B cell (primary cell): ENCODE measurements at regions of chr13 and their contacts with region 1.

Region 1: DNA sequence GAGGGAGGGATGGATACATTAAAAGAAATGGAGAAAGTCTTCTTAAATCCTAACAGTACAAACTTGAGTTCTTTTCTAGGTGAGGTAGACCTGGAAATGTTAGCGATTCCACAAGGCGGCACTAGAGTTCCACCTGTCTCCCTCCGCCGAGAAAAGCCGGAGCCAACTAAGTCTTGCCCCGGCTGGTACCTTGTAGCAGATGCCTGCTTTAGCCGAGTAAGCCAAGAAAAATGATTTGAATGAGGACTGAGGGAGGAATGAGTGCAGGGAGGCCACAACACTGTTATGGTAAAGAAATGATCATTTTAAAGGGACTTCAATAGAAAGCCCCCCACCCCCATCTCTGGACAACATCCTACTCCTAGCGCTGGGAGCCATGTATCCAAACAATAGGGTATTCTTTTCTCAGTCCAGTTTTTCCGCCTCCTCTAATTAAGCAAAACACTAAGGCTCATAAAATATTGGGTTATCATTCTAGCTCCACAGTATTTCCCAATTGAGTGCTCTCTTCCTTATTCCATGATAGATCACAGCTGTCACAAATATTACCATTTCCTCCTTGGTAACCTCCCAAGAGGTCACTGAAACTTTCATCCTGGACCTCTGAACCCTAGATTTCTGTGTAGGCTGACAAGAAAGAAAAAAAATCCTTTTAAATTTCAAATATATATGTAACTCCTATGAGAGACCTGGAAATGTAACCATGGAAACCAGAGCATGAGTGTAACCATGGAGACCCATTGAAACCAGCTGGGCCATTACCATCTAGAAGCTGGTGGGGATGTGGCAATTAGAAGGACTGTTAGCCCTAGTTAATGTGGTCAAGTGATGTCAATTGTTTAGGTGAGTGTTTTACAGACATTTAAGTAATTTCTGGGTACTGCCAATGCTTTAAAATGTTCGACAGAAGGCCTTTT is 58.3 kb downstream of the GPALPP1 start:
- DNase-seq: peak; percentile 82
- ATAC-seq: peak; percentile 87
- H3K4me3 ChIP-seq: peak overlapping the region in 3 of 5 experiments; percentile 30 to 55 (median 32)
- H3K4me3 Mint-ChIP-seq: peak overlapping the region; percentile 79
- H3K27ac ChIP-seq: no peak overlapping the region
- H3K27ac Mint-ChIP-seq: no peak overlapping the region
- H3K4me1 ChIP-seq: peaks cover 23 to 25% of the 10 kb centered on the region in 2 donors
- H3K4me1 Mint-ChIP-seq: peaks cover 23% of the 10 kb centered on the region
- H3K27me3 ChIP-seq: peaks cover 0 to 4% (median 2%) of the 10 kb centered on the region in 4 experiments
- H3K27me3 Mint-ChIP-seq: peaks cover 29% of the 10 kb centered on the region
- CTCF ChIP-seq: peak; percentile 83

Region 2: GRCh38 chr13:44484562-44485138 is 563.0 kb before region 1 on chr13:
- CTCF ChIA-PET with region 1: interaction called, 7 read pairs
- POLR2A ChIA-PET with region 1: no interaction called
- intact Hi-C with region 1: loop called (anchors 1 kb)
- DNase-seq: peak; percentile 48
- ATAC-seq: no peak
- H3K4me3 ChIP-seq: peak overlapping the region in 3 of 5 experiments; percentile 18 to 44 (median 26)
- H3K4me3 Mint-ChIP-seq: peak overlapping the region; percentile 76
- H3K27ac ChIP-seq: peak overlapping the region in 1 of 2 donors; percentile 56
- H3K27ac Mint-ChIP-seq: peak overlapping the region; percentile 63
- H3K4me1 ChIP-seq: peaks cover 10 to 11% of the 10 kb centered on the region in 2 donors
- H3K4me1 Mint-ChIP-seq: peaks cover 30% of the 10 kb centered on the region
- H3K27me3 ChIP-seq: no peaks in the 10 kb centered on the region
- H3K27me3 Mint-ChIP-seq: no peaks in the 10 kb centered on the region
- CTCF ChIP-seq: no peak

Region 3: GRCh38 chr13:45119991-45120864 is 72.6 kb after region 1 on chr13 and contains the start of gene GTF2F2:
- CTCF ChIA-PET with region 1: no interaction called
- POLR2A ChIA-PET with region 1: no interaction called
- intact Hi-C with region 1: loop called (anchors 1 kb)
- DNase-seq: peak; percentile 94
- ATAC-seq: peak; percentile 81
- H3K4me3 ChIP-seq: peak within 1 kb of the TSS; percentile 68 to 100 (median 92)
- H3K4me3 Mint-ChIP-seq: no peak within 1 kb of the TSS
- H3K27ac ChIP-seq: peak within 1 kb of the TSS; percentile 66 to 93
- H3K27ac Mint-ChIP-seq: no peak within 1 kb of the TSS
- H3K4me1 ChIP-seq: peaks cover 20 to 21% of the 10 kb centered on the region in 2 donors
- H3K4me1 Mint-ChIP-seq: peaks cover 7% of the 10 kb centered on the region
- H3K27me3 ChIP-seq: no peaks in the 10 kb centered on the region
- H3K27me3 Mint-ChIP-seq: no peaks in the 10 kb centered on the region
- CTCF ChIP-seq: no peak
- total RNA-seq, gene GTF2F2: 19.6 and 23.6 TPM in 2 replicates

Region 4: DNA sequence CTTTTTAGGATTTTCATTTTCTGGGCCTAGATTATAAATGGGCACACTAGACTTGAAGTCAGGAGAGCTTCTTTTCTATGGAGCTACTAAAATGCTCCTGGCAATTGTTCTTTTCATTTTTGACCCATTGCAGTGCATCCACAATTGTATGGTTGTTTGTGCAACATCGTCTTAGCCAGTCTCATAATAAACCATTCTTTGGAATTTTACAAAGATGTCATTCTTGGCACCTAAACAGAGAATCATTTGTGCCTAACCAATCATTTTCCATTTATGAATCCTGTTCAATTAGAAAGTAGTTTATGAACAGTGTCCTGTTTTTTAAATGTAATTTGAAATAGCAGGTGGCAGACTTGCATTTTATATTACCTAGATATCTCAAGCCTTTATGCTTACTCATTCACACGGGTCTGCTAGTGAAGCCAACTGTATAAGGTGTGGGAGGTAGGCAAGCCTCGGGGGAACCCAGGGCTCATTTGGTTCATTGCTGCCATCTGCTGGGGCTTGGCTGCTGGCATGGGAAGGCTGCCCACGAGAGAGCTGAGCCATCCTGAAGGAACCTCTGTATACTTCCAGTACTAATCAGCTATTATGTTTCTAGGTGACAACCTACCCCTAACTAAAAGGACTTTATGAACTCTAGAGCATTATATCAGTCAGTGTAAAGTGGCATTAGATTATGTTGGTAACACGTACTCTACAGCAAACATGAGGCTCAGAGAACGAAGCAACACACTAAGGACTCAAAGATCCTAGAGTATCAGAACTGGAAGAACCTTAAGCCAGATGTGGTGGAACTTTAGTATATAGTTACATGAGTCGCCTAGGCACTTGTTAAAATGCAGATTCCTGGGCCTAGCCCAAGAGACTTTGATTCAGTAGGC is 233.3 kb after region 1 on chr13:
- CTCF ChIA-PET with region 1: interaction called, 76 read pairs
- POLR2A ChIA-PET with region 1: no interaction called
- intact Hi-C with region 1: loop called (anchors 1 kb)
- DNase-seq: peak; percentile 52
- ATAC-seq: peak; percentile 76
- H3K4me3 ChIP-seq: no peak overlapping the region
- H3K4me3 Mint-ChIP-seq: no peak overlapping the region
- H3K27ac ChIP-seq: no peak overlapping the region
- H3K27ac Mint-ChIP-seq: no peak overlapping the region
- H3K4me1 ChIP-seq: peaks cover 3 to 7% of the 10 kb centered on the region in 2 donors
- H3K4me1 Mint-ChIP-seq: peaks cover 14% of the 10 kb centered on the region
- H3K27me3 ChIP-seq: no peaks in the 10 kb centered on the region
- H3K27me3 Mint-ChIP-seq: no peaks in the 10 kb centered on the region
- CTCF ChIP-seq: peak; percentile 48

Region 5: DNA sequence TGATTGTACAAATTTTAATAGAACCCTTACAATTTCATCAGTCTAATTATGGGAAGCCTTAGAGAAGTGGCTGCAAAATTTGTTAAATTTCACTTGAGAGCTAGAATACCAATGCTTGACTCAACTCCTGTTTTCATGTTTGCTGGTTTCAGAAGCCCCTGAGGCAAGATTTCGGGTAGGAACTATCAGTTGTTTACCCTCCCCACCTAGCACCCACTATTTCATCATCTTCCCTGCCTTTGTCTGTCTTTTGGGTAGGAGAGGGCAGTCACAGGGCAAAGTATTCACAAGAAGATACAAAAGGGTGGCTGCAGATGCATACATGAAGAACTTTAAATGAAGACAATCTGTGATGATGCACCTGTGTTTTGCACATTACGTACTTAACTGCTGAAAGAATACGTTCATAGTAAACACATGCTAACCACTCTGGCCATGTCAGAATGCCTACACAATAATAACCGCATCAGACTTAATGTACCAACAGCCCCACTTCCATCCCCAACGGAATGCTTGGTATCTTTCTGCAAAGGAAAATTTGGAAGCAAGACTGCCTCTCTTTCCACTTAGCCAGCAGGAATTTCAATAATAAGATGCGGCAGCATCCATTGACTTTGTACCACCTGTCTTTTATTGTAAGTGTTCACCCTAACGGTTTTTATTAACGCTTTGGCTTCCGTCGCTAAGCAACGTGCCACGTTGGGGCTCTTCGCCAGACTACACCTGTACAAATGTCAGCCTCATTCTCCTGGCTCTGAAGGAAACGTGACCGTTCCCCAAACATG is 262.9 kb after region 1 on chr13:
- CTCF ChIA-PET with region 1: interaction called, 97 read pairs
- POLR2A ChIA-PET with region 1: no interaction called
- intact Hi-C with region 1: loop called (anchors 1 kb)
- DNase-seq: no peak
- ATAC-seq: no peak
- H3K4me3 ChIP-seq: peak overlapping the region in 3 of 5 experiments; percentile 53 to 69 (median 57)
- H3K4me3 Mint-ChIP-seq: peak overlapping the region; percentile 84
- H3K27ac ChIP-seq: no peak overlapping the region
- H3K27ac Mint-ChIP-seq: no peak overlapping the region
- H3K4me1 ChIP-seq: peaks cover 11 to 16% of the 10 kb centered on the region in 2 donors
- H3K4me1 Mint-ChIP-seq: peaks cover 17% of the 10 kb centered on the region
- H3K27me3 ChIP-seq: peaks cover 0 to 21% (median 13%) of the 10 kb centered on the region in 4 experiments
- H3K27me3 Mint-ChIP-seq: peaks cover 34% of the 10 kb centered on the region
- CTCF ChIP-seq: no peak

Region 6: DNA sequence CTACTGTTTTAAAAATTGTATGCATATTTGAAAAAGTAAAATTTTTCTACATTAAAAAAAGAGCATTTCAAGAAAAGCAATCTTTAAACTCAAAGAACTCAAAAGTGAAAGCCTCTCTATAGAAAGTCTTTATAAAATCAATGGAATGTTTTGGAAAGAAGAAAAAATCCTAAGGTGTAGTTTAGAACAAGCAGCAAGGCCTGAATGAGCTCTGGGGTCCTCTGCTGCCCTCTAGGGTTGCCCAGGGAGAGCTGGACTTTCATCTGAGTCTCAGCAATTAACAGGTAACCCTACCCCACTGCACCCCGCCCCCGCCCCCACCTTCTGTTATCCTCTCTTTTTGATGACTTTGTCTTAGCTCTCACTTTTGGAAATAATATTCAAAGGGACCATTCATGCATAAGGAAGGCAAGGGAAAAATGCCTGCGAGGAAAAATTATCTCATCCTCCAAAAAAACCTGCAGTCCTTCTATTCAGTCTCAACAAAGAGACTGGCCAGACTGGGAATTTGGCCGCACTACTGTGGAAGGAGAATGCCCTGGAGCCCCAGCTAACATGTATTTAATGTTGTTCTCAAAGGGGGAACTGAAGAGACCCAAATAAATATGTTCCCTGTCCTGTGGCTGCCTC is 346.4 kb after region 1 on chr13:
- CTCF ChIA-PET with region 1: interaction called, 25 read pairs
- POLR2A ChIA-PET with region 1: no interaction called
- intact Hi-C with region 1: loop called (anchors 1 kb)
- DNase-seq: peak; percentile 49
- ATAC-seq: peak; percentile 47
- H3K4me3 ChIP-seq: no peak overlapping the region
- H3K4me3 Mint-ChIP-seq: no peak overlapping the region
- H3K27ac ChIP-seq: no peak overlapping the region
- H3K27ac Mint-ChIP-seq: no peak overlapping the region
- H3K4me1 ChIP-seq: no peaks in the 10 kb centered on the region
- H3K4me1 Mint-ChIP-seq: peaks cover 6% of the 10 kb centered on the region
- H3K27me3 ChIP-seq: no peaks in the 10 kb centered on the region
- H3K27me3 Mint-ChIP-seq: no peaks in the 10 kb centered on the region
- CTCF ChIP-seq: peak; percentile 63

Region 7: GRCh38 chr13:45490068-45490467 is 442.4 kb after region 1 on chr13:
- CTCF ChIA-PET with region 1: interaction called, 3 read pairs
- POLR2A ChIA-PET with region 1: no interaction called
- intact Hi-C with region 1: loop called (anchors 5 kb)
- DNase-seq: peak; percentile 35
- ATAC-seq: no peak
- H3K4me3 ChIP-seq: no peak overlapping the region
- H3K4me3 Mint-ChIP-seq: no peak overlapping the region
- H3K27ac ChIP-seq: no peak overlapping the region
- H3K27ac Mint-ChIP-seq: no peak overlapping the region
- H3K4me1 ChIP-seq: no peaks in the 10 kb centered on the region
- H3K4me1 Mint-ChIP-seq: no peaks in the 10 kb centered on the region
- H3K27me3 ChIP-seq: no peaks in the 10 kb centered on the region
- H3K27me3 Mint-ChIP-seq: no peaks in the 10 kb centered on the region
- CTCF ChIP-seq: peak; percentile 57

Region 8: GRCh38 chr13:45683701-45684100 is 636.0 kb after region 1 on chr13:
- CTCF ChIA-PET with region 1: no interaction called
- POLR2A ChIA-PET with region 1: no interaction called
- intact Hi-C with region 1: no loop called
- DNase-seq: peak; percentile 9
- ATAC-seq: no peak
- H3K4me3 ChIP-seq: no peak overlapping the region
- H3K4me3 Mint-ChIP-seq: no peak overlapping the region
- H3K27ac ChIP-seq: no peak overlapping the region
- H3K27ac Mint-ChIP-seq: no peak overlapping the region
- H3K4me1 ChIP-seq: no peaks in the 10 kb centered on the region
- H3K4me1 Mint-ChIP-seq: no peaks in the 10 kb centered on the region
- H3K27me3 ChIP-seq: no peaks in the 10 kb centered on the region
- H3K27me3 Mint-ChIP-seq: peaks cover 14% of the 10 kb centered on the region
- CTCF ChIP-seq: no peak